CD14-positive monocyte (primary cell): ENCODE measurements at regions of chr5 and their contacts with region 1.

Region 1: DNA sequence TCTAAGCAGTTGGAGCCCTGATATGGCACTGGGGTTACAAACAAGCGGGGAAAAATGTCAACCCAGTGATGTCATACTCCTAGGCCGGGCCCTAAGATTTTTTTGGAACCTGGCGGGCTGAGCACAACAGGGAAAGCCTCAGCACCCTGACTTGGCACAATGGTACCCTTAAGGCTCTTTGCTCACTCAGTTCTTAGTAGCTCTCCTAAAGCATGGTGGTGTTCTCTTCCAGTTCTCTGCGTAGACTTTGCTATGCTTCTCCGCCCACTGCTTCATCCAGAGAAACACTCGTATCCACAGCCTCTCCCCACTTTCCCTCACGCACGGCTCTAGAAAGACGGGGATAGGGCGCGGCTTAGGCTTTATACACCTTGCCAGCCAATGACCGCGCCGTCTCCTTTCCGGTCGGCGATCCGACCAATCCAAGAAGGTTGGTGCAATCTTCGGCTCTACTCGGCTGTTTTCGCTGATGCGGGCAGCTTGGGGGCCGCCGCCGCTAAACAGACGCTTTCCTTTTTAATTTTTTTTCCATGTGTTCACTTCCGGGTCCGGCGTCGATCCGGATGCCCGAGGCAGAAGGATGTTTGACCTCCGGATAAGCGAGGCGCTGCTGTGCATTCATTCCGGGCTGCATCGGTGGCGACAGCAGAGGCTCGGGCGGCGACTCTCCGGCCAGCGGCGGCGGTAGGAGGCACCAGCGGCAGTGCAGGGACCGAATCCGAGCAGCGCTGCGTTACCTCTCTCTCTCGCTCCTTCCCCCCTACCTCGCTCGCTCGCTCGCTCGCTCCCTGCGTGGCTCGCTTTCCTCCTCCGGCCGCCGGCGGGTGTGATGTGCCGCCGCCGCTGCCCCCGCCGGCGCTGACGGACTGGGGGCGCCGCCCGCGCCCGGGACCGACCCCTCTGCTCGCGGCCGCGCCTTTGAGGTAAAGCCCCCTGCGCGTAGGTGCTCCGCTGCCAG is at the start of gene CSNK1G3:
- DNase-seq: peak; percentile 92 to 95 (median 94)
- H3K4me3 ChIP-seq: peak within 1 kb of the TSS; percentile 71 to 92 (median 86)
- H3K4me3 Mint-ChIP-seq: peak within 1 kb of the TSS; percentile 98
- H3K27ac ChIP-seq: peak within 1 kb of the TSS; percentile 70 to 82
- H3K27ac Mint-ChIP-seq: peak within 1 kb of the TSS; percentile 87 to 98 (median 94)
- H3K4me1 ChIP-seq: peaks cover 10 to 12% of the 10 kb centered on the region in 2 donors
- H3K4me1 Mint-ChIP-seq: peaks cover 24% of the 10 kb centered on the region
- H3K27me3 ChIP-seq: no peaks in the 10 kb centered on the region
- H3K27me3 Mint-ChIP-seq: peaks cover 3 to 6% (median 5%) of the 10 kb centered on the region in 3 donors
- CTCF ChIP-seq: no peak
- polyA plus RNA-seq, gene CSNK1G3: 10.8 to 22.3 (median 17.1) TPM

Region 2: DNA sequence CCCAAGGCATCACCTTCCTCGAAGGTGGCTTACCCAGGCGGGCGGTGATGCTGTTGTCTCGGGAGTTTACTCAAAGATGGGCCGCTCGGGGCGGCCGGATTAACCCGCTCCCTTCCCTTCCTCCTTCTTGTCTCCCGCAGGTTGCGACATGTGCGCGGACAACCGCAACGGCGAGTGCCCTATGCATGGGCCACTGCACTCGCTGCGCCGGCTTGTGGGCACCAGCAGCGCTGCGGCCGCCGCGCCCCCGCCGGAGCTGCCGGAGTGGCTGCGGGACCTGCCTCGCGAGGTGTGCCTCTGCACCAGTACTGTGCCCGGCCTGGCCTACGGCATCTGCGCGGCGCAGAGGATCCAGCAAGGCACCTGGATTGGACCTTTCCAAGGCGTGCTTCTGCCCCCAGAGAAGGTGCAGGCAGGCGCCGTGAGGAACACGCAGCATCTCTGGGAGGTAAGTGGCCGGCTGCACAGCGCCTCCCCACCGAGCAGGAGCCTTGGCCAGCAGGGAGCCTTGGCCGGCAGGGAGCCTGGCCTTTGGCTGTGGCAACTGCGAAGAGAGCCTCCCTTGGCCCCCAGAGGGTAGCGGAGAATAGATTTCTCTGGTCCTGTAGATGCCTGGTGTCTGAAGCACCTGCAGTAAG is 412.3 kb before region 1 on chr5:
- intact Hi-C with region 1: no loop called
- DNase-seq: no peak
- H3K4me3 ChIP-seq: peak overlapping the region in 1 of 3 experiments; percentile 39
- H3K4me3 Mint-ChIP-seq: peak overlapping the region; percentile 9 to 95
- H3K27ac ChIP-seq: no peak overlapping the region
- H3K27ac Mint-ChIP-seq: no peak overlapping the region
- H3K4me1 ChIP-seq: peaks cover 0 to 13% of the 10 kb centered on the region in 2 donors
- H3K4me1 Mint-ChIP-seq: peaks cover 6% of the 10 kb centered on the region
- H3K27me3 ChIP-seq: peaks cover 73 to 86% of the 10 kb centered on the region in 2 donors
- H3K27me3 Mint-ChIP-seq: peaks cover 62 to 85% (median 79%) of the 10 kb centered on the region in 3 donors
- CTCF ChIP-seq: no peak

Region 3: GRCh38 chr5:123157791-123158581 is 353.9 kb before region 1 on chr5:
- intact Hi-C with region 1: no loop called
- DNase-seq: no peak
- H3K4me3 ChIP-seq: no peak overlapping the region
- H3K4me3 Mint-ChIP-seq: no peak overlapping the region
- H3K27ac ChIP-seq: no peak overlapping the region
- H3K27ac Mint-ChIP-seq: no peak overlapping the region
- H3K4me1 ChIP-seq: no peaks in the 10 kb centered on the region
- H3K4me1 Mint-ChIP-seq: no peaks in the 10 kb centered on the region
- H3K27me3 ChIP-seq: no peaks in the 10 kb centered on the region
- H3K27me3 Mint-ChIP-seq: peaks cover 2 to 5% (median 4%) of the 10 kb centered on the region in 3 donors
- CTCF ChIP-seq: no peak

Region 4: DNA sequence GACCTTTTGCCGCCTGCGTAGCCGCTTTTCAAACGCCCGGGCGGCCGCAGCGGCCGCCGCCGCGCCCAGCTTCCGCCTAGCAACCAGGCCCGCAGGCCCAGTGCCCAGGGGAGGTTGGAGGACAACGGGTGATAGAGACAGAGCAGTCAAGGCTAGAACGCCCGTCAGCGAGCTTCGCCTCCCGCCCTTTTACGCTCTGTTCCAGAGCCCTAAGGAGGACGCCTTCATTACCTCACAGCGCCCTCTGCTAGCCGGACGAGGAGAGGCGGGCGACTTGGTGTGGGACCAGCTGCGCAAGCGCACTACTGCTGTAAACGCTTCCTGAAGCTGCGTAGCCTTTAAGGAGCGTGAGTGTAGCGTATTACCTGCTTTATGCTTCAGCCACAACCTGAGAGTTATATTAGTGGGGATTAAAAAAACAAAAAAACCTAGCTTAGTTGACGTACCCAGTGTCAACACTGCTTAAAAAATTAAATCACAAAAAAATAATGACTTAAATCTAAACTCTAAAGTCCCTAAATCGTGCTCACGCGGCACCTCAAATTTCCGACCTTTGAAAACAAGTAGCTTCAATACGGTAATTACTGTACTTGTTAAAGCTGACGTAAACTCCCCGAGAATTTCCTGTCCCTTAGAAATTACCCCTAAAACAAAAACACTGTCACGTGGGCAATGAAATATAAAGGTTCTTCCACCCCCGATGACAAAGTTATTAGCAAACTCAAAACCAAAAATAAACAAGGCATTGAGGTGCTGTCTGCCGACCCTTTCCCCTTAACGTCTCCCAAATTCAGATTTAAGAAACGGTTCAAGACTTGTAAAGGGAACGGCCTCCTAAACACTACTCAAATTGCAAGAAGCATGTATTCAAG is 88.4 kb before region 1 on chr5 and contains the start of gene CEP120:
- intact Hi-C with region 1: loop called (anchors 5 kb)
- DNase-seq: peak; percentile 98 to 100 (median 99)
- H3K4me3 ChIP-seq: peak within 1 kb of the TSS; percentile 80 to 93 (median 86)
- H3K4me3 Mint-ChIP-seq: peak within 1 kb of the TSS in 1 of 2 donors; percentile 87
- H3K27ac ChIP-seq: peak within 1 kb of the TSS; percentile 53 to 93
- H3K27ac Mint-ChIP-seq: peak within 1 kb of the TSS in 4 of 7 donors; percentile 90 to 96 (median 93)
- H3K4me1 ChIP-seq: peaks cover 26 to 51% of the 10 kb centered on the region in 2 donors
- H3K4me1 Mint-ChIP-seq: peaks cover 29% of the 10 kb centered on the region
- H3K27me3 ChIP-seq: no peaks in the 10 kb centered on the region
- H3K27me3 Mint-ChIP-seq: no peaks in the 10 kb centered on the region
- CTCF ChIP-seq: peak; percentile 77
- polyA plus RNA-seq, gene CEP120: 6.4 to 7.2 (median 6.6) TPM

Region 5: GRCh38 chr5:123429221-123429954 is 82.5 kb before region 1 on chr5:
- intact Hi-C with region 1: loop called (anchors 5 kb)
- DNase-seq: peak; percentile 20 to 77 (median 58)
- H3K4me3 ChIP-seq: peak overlapping the region in 1 of 3 experiments; percentile 30
- H3K4me3 Mint-ChIP-seq: no peak overlapping the region
- H3K27ac ChIP-seq: peak overlapping the region; percentile 68 to 83
- H3K27ac Mint-ChIP-seq: peak overlapping the region; percentile 85 to 97 (median 93)
- H3K4me1 ChIP-seq: peaks cover 33 to 64% of the 10 kb centered on the region in 2 donors
- H3K4me1 Mint-ChIP-seq: peaks cover 43% of the 10 kb centered on the region
- H3K27me3 ChIP-seq: no peaks in the 10 kb centered on the region
- H3K27me3 Mint-ChIP-seq: peaks cover 0 to 2% (median 0%) of the 10 kb centered on the region in 3 donors
- CTCF ChIP-seq: no peak